Activated naive CD4-positive, alpha-beta T cell treated with anti-CD3 and anti-CD28 coated beads, Interleukin-2, amount 10 ng/mL, durations not matched to agents 7 days and 5 days (primary cell): ENCODE measurements at regions of chr19 and their contacts with region 1.

Region 1: DNA sequence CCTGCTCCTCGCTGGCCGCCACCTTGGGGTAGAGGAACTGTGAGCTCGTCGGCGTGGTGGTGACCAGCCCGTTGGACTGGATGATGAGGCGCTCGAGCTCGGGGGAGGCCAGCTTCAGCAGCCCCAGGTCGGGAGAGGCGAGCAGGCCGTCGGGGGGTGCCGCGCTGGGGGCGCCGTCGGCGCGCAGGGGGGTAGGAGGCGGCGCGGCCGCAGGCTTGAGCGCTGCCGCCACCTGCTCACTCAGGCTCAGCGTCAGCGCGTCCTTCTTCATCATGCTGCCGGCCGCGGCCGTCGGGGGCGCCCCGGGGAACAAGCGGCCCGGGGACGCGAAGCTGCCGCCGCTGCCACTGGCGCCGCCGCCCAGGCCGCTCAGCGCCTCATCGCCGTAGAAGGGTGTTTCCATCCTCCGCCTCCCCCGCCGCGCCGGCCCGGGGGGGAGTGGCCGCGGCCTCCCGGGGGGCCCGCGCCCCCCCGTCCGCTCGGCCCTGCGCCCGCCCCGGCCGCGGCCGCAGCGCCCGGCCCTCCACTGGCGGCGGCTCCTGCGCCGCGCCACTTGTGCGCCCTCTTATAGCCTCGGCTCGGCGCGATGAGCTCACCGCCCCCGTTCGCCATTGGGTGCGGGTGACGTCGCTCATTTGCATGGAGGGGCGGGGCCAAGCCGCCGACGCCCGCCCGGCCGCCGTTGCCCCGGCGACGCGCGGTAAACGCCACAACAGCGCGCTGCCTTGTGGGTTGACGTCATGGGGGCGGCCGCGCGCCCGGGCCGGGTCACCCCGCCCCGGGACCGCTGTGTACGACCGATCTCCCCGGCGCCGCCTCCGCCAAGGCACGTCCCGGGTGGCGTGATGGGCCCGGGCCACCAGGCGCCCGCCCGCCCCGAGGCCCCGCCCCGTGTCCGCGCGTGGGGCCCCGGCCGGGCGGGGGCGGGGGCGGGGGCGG is at the start of gene JUND:
- DNase-seq: peak; percentile 98
- H3K4me3 Mint-ChIP-seq: peak within 1 kb of the TSS; percentile 95
- H3K27ac Mint-ChIP-seq: peak within 1 kb of the TSS; percentile 99
- H3K4me1 Mint-ChIP-seq: peaks cover 60% of the 10 kb centered on the region
- H3K27me3 Mint-ChIP-seq: peaks cover 4% of the 10 kb centered on the region

Region 2: DNA sequence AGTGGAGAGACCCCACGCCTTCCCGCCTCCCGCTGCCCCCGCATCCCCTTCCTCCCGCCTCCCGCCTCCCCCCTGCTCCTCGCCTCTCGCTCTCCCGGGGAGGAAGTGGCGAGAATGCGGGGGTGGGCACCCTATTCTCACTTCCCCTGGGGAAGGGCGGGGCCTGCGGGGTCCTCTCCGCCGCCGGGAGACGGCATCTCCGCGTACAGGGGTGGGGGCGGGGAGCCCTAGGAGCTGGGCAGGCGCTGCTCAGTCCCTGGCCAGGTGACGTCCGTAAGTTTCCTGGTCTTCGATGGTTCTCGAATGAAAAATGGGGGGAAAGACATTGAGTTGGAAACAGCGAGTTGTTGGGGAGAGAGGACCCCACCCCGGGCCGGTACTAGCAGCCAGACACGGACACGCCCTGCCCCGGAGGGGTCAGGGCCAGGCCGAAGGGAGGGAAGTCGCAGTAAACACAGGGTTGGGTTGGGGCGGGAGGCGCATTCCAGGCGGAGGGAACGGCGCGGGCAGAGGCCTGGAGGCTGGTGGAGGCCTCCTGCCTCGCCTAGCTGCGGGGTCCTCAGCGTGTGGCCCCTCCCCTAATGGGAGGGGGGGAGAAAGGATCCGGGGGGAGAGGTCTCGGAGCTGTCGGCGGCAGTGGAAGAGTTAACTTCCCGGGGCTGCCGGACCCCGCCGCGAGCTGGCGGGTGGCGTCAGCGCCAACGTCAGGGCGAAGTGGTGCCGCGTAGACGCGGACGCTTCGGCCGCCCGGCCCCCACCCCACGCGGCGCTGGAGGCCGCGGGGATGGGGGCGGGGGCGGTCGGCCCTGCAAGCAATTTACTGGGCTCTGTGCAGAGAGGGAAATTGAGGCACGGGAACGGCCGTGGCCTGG is 10.5 kb after region 1 on chr19:
- CTCF ChIA-PET with region 1: interaction called, 73 read pairs
- DNase-seq: peak; percentile 91
- H3K4me3 Mint-ChIP-seq: peak overlapping the region; percentile 89
- H3K27ac Mint-ChIP-seq: peak overlapping the region; percentile 96
- H3K4me1 Mint-ChIP-seq: peaks cover 77% of the 10 kb centered on the region
- H3K27me3 Mint-ChIP-seq: no peaks in the 10 kb centered on the region

Region 3: GRCh38 chr19:18322759-18323460 is 41.6 kb after region 1 on chr19 and contains the start of gene LSM4:
- CTCF ChIA-PET with region 1: interaction called, 236 read pairs
- DNase-seq: peak; percentile 100
- H3K4me3 Mint-ChIP-seq: peak within 1 kb of the TSS; percentile 89
- H3K27ac Mint-ChIP-seq: peak within 1 kb of the TSS; percentile 96
- H3K4me1 Mint-ChIP-seq: peaks cover 54% of the 10 kb centered on the region
- H3K27me3 Mint-ChIP-seq: no peaks in the 10 kb centered on the region

Region 4: GRCh38 chr19:18340190-18340989 is 59.0 kb after region 1 on chr19 and contains the start of gene PGPEP1:
- CTCF ChIA-PET with region 1: interaction called, 18 read pairs
- DNase-seq: peak; percentile 67
- H3K4me3 Mint-ChIP-seq: peak within 1 kb of the TSS; percentile 83
- H3K27ac Mint-ChIP-seq: peak within 1 kb of the TSS; percentile 81
- H3K4me1 Mint-ChIP-seq: peaks cover 21% of the 10 kb centered on the region
- H3K27me3 Mint-ChIP-seq: peaks cover 17% of the 10 kb centered on the region

Region 5: GRCh38 chr19:18357041-18357440 is 75.7 kb after region 1 on chr19:
- CTCF ChIA-PET with region 1: no interaction called
- DNase-seq: no peak
- H3K4me3 Mint-ChIP-seq: no peak overlapping the region
- H3K27ac Mint-ChIP-seq: no peak overlapping the region
- H3K4me1 Mint-ChIP-seq: no peaks in the 10 kb centered on the region
- H3K27me3 Mint-ChIP-seq: no peaks in the 10 kb centered on the region

Region 6: GRCh38 chr19:18408053-18408476 is 126.7 kb after region 1 on chr19:
- CTCF ChIA-PET with region 1: interaction called, 26 read pairs
- DNase-seq: peak; percentile 60
- H3K4me3 Mint-ChIP-seq: no peak overlapping the region
- H3K27ac Mint-ChIP-seq: no peak overlapping the region
- H3K4me1 Mint-ChIP-seq: peaks cover 6% of the 10 kb centered on the region
- H3K27me3 Mint-ChIP-seq: peaks cover 30% of the 10 kb centered on the region